PC-3 (cell line): ENCODE measurements at regions of chr2 and their contacts with region 1.

Region 1: GRCh38 chr2:152564754-152565551 is 152.3 kb downstream of the PRPF40A start:
- DNase-seq: peak; percentile 43
- ATAC-seq: peak; percentile 35
- H3K4me3 ChIP-seq: no peak overlapping the region
- H3K27ac ChIP-seq: peak overlapping the region; percentile 29
- H3K4me1 ChIP-seq: peaks cover 37% of the 10 kb centered on the region
- H3K27me3 ChIP-seq: no peaks in the 10 kb centered on the region
- CTCF ChIP-seq: no peak

Region 2: GRCh38 chr2:152600698-152601097 is 35.7 kb after region 1 on chr2:
- CTCF ChIA-PET with region 1: interaction called, 13 read pairs
- POLR2A ChIA-PET with region 1: no interaction called
- intact Hi-C with region 1: no loop called
- DNase-seq: no peak
- ATAC-seq: no peak
- H3K4me3 ChIP-seq: no peak overlapping the region
- H3K27ac ChIP-seq: no peak overlapping the region
- H3K4me1 ChIP-seq: no peaks in the 10 kb centered on the region
- H3K27me3 ChIP-seq: no peaks in the 10 kb centered on the region
- CTCF ChIP-seq: no peak